Thyroid gland (tissue), 4 donors: ENCODE measurements at regions of chr1 and their contacts with region 1.

Region 1: DNA sequence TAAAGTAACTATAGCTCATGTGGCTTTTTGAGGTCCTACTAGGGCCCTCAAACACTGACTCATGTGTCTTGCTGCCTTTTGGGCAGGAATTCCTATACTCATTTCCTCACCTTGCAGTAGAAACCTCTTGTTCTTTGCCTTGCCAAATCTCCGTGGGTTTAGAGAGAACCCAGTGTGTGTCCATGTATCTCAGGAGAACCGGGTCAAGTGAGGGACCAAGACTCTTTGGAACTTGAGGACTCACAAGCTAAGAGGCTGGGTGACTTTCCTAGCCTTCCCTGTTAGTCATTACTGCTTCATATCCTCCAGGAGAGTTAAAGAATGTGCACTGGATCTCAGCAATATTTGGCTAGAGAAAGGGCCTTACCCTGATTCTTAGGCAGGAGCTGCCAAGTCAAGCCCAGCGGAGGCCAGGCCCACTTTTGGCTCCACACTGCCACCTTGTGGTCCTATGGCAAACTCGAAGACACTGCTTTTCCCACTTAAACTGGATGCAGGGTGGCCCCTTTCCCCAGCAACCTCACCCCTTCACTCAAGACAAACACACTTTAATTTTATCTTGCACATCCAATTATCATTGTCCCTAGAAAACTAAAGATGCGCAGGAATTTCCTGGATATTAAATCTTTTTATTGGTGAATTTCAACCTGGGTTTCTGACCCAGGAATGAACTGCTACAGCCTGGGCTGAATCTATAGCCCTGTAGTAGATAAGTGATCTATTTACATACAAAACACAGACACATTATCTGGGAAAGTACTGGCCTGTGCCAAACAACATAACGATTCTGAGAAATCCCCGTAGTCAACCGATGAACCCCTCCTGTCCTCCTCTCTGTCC is 10.6 kb downstream of the AVPR1B start:
- DNase-seq: peak; percentile 86 to 90
- H3K4me3 ChIP-seq: no peak overlapping the region
- H3K27ac ChIP-seq: peak overlapping the region; percentile 5 to 65 (median 51)
- H3K4me1 ChIP-seq: peaks cover 0 to 6% of the 10 kb centered on the region in 2 donors
- H3K27me3 ChIP-seq: no peaks in the 10 kb centered on the region
- CTCF ChIP-seq: peak; percentile 56 to 95 (median 86)
- POLR2A ChIP-seq: no peak

Region 2: DNA sequence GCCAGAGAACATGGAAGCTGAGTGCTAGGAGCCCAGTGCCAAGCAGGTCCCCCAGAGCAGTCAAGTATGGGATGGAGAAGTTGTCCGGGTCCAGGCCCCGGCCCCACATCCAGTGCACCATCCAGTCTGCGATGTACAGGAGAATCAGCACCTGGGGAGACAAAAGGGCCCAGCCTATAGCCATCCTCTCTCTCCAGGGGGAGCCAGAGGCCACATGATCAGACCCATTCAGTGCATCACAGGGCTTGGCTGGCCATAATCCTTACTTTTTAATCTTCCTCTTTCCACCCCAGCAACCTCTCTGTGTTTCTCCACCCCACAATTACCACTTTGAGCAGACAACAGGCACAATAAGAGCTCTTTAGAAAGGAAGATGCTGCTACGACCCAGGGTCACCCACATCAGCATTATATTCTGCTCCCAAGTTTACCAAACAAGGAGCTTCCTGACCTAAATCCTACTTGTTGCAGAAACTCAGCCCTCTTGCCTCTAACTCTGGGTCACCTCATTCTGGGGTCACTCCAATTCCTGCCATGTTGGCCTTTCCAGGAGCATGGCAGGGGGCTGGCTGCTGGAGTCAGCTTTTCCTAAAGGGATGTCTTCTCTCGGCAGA is 314.9 kb before region 1 on chr1:
- intact Hi-C with region 1: loop called (anchors 10 kb)
- DNase-seq: peak; percentile 67 to 74
- H3K4me3 ChIP-seq: no peak overlapping the region
- H3K27ac ChIP-seq: no peak overlapping the region
- H3K4me1 ChIP-seq: no peaks in the 10 kb centered on the region
- H3K27me3 ChIP-seq: no peaks in the 10 kb centered on the region
- CTCF ChIP-seq: peak; percentile 16 to 77 (median 66)
- POLR2A ChIP-seq: no peak

Region 3: DNA sequence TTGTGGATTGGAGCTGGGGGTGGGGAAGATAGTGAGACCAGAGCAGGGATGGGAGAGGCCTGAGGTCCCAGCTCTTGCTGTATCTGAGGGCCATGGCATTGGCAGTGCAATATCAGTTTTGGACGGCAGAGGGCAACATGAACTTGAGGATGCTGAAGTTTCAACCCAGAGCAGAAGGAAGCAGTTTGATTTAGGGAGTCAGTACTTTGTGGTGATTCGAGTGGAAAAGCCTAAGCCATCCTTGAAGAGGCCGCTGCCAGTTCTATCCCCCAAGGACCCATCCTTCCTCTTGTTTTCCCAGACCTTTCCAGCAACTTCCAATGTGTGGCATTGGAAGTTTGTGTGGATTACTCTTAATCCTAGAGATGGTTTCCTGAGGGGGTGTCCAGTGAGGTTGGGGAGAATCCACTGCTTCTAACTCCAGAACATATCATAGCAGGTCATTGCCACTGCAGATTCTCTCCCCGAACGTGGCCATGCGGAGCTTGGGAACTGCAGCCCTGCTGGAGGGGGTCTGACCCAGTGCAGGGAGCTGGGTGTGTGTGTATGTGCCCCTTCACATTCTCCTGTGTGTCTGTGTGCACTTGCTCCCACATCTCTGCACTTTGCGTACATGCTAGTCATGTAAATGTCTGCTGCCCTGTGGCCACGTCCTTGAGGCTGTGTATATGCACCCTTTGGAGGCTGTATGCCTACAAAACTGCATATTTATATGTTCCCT is 187.4 kb before region 1 on chr1:
- intact Hi-C with region 1: loop called (anchors 5 kb)
- DNase-seq: peak; percentile 87 to 91
- H3K4me3 ChIP-seq: no peak overlapping the region
- H3K27ac ChIP-seq: peak overlapping the region; percentile 41 to 89 (median 83)
- H3K4me1 ChIP-seq: peaks cover 44 to 55% of the 10 kb centered on the region in 2 donors
- H3K27me3 ChIP-seq: no peaks in the 10 kb centered on the region
- CTCF ChIP-seq: peak; percentile 80 to 99 (median 94)
- POLR2A ChIP-seq: peak in 1 of 2 donors; percentile 8

Region 4: GRCh38 chr1:205983925-205984725 is 122.4 kb before region 1 on chr1:
- intact Hi-C with region 1: loop called (anchors 2 kb)
- DNase-seq: peak; percentile 70 to 80
- H3K4me3 ChIP-seq: no peak overlapping the region
- H3K27ac ChIP-seq: peak overlapping the region; percentile 53 to 74 (median 63)
- H3K4me1 ChIP-seq: peaks cover 24 to 30% of the 10 kb centered on the region in 2 donors
- H3K27me3 ChIP-seq: no peaks in the 10 kb centered on the region
- CTCF ChIP-seq: peak; percentile 29 to 88 (median 74)
- POLR2A ChIP-seq: no peak

Region 5: GRCh38 chr1:206030714-206031113 is 75.8 kb before region 1 on chr1:
- intact Hi-C with region 1: loop called (anchors 10 kb)
- DNase-seq: peak; percentile 77 to 84
- H3K4me3 ChIP-seq: no peak overlapping the region
- H3K27ac ChIP-seq: peak overlapping the region in 1 of 3 donors; percentile 67
- H3K4me1 ChIP-seq: peaks cover 29 to 43% of the 10 kb centered on the region in 2 donors
- H3K27me3 ChIP-seq: no peaks in the 10 kb centered on the region
- CTCF ChIP-seq: peak in 5 of 6 experiments; percentile 47 to 89 (median 82)
- POLR2A ChIP-seq: no peak

Region 6: GRCh38 chr1:206143537-206144172 is 37.1 kb after region 1 on chr1:
- intact Hi-C with region 1: no loop called
- DNase-seq: no peak
- H3K4me3 ChIP-seq: no peak overlapping the region
- H3K27ac ChIP-seq: no peak overlapping the region
- H3K4me1 ChIP-seq: no peaks in the 10 kb centered on the region
- H3K27me3 ChIP-seq: no peaks in the 10 kb centered on the region
- CTCF ChIP-seq: no peak
- POLR2A ChIP-seq: no peak